BJ (cell line): ENCODE measurements at regions of chr15 and their contacts with region 1.

Region 1: GRCh38 chr15:42465520-42466259 is 25.3 kb downstream of the ZNF106 start:
- DNase-seq: no peak
- H3K4me3 ChIP-seq: no peak overlapping the region
- H3K27me3 ChIP-seq: no peaks in the 10 kb centered on the region
- CTCF ChIP-seq: no peak

Region 2: DNA sequence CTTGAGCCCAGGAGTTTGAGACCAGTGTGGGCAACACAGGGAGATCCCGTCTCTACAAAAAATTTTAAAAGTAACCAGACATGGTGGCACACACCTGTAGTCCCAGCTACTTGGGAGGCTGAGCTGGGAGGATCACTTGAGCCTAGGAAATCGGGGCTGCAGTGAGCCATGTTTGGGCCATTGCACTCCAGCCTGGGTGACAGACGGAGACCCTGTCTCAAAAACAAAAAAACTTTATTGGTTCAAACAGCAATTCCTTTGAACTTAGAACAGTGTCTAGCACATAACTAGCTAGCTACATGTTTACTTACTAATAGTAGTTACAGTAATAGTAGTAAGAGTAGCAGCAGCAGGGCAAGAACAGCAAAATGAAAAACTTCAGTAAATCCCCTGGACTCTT is 93.0 kb after region 1 on chr15:
- CTCF ChIA-PET with region 1: no interaction called
- POLR2A ChIA-PET with region 1: interaction called, 15 read pairs
- DNase-seq: no peak
- H3K4me3 ChIP-seq: no peak overlapping the region
- H3K27me3 ChIP-seq: no peaks in the 10 kb centered on the region
- CTCF ChIP-seq: no peak